ENCODE measurements at regions of chr5 and their contacts with region 1.

Region 1: DNA sequence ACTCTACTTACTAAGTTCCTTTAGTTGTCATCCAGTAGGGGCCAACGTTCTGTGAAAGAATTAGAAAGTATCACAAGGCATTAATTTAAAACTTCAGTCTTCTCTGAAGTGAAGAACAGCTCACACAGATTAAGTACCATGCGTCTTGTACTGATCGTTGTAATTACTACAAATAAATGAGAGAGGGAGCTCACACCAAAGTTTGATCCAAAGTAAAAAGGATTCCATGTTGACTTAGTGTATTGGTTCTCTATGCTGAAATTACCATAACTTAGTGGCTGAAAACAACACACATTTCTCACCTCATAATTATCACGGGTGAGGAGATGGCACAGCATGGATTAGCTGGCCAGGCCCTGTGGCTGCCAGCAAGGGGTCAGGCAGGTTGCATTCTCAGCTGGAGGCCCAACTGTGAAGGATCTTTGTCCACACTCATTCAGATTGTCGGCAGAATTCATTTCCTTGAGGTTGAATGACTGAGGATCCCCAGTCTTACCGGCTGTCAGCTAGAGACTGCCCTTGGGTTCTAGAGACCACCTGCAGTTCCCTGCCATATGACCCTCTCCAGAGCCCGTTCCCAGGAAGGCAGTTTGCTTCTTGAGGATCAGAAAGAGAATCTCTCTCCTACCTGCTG is 169.1 kb downstream of the YTHDC2 start:
- DNase-seq: no peak
- H3K4me3 ChIP-seq: no peak overlapping the region
- H3K27ac ChIP-seq: no peak overlapping the region
- H3K4me1 ChIP-seq: no peaks in the 10 kb centered on the region
- H3K27me3 ChIP-seq: no peaks in the 10 kb centered on the region
- CTCF ChIP-seq: peak in 2 of 6 experiments; percentile 18 to 19
- POLR2A ChIP-seq: no peak

Region 2: DNA sequence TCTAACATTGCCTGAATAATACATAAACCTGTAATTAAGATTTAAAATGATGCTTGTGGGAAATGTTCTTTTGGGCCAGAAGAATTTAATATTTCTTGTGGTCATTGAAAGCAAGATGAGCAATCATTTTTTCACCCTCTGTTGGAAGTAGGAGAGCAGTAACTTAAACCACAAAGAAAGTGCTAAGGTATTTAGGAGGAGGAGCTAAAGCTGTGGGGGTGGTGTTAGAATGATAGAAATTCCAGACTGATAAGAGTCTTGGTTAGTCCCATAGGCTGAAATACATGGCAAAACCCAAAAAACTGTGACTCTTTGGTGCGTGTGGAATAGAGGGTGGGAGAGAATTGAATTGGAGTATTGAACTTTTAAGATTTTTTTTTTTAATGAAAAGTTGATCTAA is 77.9 kb after region 1 on chr5:
- intact Hi-C with region 1: no loop called
- DNase-seq: no peak
- H3K4me3 ChIP-seq: no peak overlapping the region
- H3K27ac ChIP-seq: no peak overlapping the region
- H3K4me1 ChIP-seq: no peaks in the 10 kb centered on the region
- H3K27me3 ChIP-seq: no peaks in the 10 kb centered on the region
- CTCF ChIP-seq: no peak
- POLR2A ChIP-seq: no peak

Region 3: GRCh38 chr5:113806904-113807303 is 124.3 kb after region 1 on chr5:
- intact Hi-C with region 1: no loop called
- DNase-seq: peak; percentile 32 to 52
- H3K4me3 ChIP-seq: no peak overlapping the region
- H3K27ac ChIP-seq: peak overlapping the region; percentile 27 to 80 (median 68)
- H3K4me1 ChIP-seq: peaks cover 13 to 23% of the 10 kb centered on the region in 2 donors
- H3K27me3 ChIP-seq: no peaks in the 10 kb centered on the region
- CTCF ChIP-seq: no peak
- POLR2A ChIP-seq: no peak

Region 4: DNA sequence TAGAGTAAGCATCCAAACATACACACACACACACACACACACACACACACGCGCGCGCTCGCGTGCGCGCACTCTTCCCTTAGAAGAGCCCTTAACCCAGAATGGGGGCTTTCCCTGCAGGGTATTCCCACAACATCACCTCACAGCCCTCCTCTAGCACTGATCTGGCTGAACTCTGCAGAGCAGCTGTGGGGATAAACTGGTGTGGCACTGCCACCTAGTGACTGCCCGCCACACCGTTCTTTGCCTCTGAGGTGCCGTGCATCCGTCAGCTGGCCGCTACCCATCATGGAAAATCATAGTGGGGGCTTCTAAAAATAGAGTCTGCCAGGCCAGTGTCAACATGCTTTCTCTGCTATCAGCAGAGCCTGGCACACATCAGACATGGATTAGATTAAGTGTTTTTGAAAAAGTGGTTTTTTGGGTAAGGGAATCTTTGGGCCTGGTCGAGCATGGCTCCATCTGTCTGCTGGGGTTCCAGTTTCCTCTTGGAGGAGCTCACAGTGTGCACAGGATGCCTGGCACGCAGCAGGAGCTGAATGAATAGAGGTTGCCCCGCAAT is 767.3 kb after region 1 on chr5:
- intact Hi-C with region 1: loop called (anchors 5 kb)
- DNase-seq: peak; percentile 45 to 58
- H3K4me3 ChIP-seq: no peak overlapping the region
- H3K27ac ChIP-seq: no peak overlapping the region
- H3K4me1 ChIP-seq: no peaks in the 10 kb centered on the region
- H3K27me3 ChIP-seq: no peaks in the 10 kb centered on the region
- CTCF ChIP-seq: peak; percentile 41 to 77 (median 56)
- POLR2A ChIP-seq: no peak